ENCODE measurements at regions of chr14 and their contacts with region 1.

Region 1: GRCh38 chr14:89973234-89973823 is 17.6 kb downstream of the TDP1 start:
- DNase-seq: peak; percentile 49 to 70
- ATAC-seq: peak; percentile 88

Region 2: GRCh38 chr14:90235179-90235976 is 262.0 kb after region 1 on chr14:
- intact Hi-C with region 1: loop called in 1 of 2 experiments (anchors 5 kb)
- DNase-seq: peak; percentile 31 to 64
- ATAC-seq: peak; percentile 76